Thyroid gland (tissue), 4 donors: ENCODE measurements at regions of chr1 and their contacts with region 1.

Region 1: DNA sequence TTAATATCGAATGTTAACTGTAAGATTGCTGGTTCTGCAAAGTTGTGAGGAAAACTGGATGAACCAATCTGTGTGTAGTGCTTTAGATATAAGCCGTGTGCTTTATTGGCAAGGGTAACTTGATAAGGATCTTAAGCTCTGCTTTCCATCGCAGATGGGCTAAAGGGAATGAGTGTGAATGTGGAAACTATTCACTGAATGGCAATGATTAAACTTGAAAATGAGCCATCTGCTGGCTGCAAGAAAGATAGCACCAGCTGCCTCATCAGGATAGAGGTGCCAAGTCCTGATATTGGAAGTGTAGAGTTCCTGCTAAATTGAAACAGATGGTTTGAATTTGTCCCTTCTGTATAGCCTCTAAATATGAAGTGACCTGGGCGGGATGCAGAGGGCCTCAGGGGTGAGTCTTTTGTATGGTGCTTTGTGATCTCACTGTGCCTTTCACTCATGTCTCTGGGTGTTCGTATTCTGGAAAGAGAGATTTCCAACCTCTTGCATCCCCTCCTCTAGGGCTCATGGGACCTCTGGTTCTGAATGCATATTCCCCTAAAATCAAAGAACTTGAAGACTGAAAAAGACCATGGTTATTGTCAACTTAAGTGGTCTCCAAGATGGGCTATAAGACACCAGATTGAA is 9.2 kb downstream of the FCRL3 start:
- DNase-seq: no peak
- H3K4me3 ChIP-seq: no peak overlapping the region
- H3K27ac ChIP-seq: no peak overlapping the region
- H3K4me1 ChIP-seq: no peaks in the 10 kb centered on the region
- H3K27me3 ChIP-seq: no peaks in the 10 kb centered on the region
- CTCF ChIP-seq: peak in 5 of 6 experiments; percentile 9 to 59 (median 46)
- POLR2A ChIP-seq: no peak

Region 2: GRCh38 chr1:157580179-157580827 is 111.1 kb before region 1 on chr1:
- intact Hi-C with region 1: loop called (anchors 10 kb)
- DNase-seq: peak; percentile 19 to 22
- H3K4me3 ChIP-seq: no peak overlapping the region
- H3K27ac ChIP-seq: no peak overlapping the region
- H3K4me1 ChIP-seq: no peaks in the 10 kb centered on the region
- H3K27me3 ChIP-seq: no peaks in the 10 kb centered on the region
- CTCF ChIP-seq: peak in 5 of 6 experiments; percentile 57 to 77 (median 72)
- POLR2A ChIP-seq: no peak